ENCODE measurements at regions of chr5 and their contacts with region 1.

Region 1: GRCh38 chr5:82154776-82155175 is 123.4 kb downstream of the RPS23 start:
- DNase-seq: peak; percentile 34
- ATAC-seq: peak; percentile 89
- H3K4me3 ChIP-seq: no peak overlapping the region
- H3K27ac ChIP-seq: no peak overlapping the region
- H3K4me1 ChIP-seq: no peaks in the 10 kb centered on the region; the same call in 1 of the 2 replicates
- H3K27me3 ChIP-seq: no peaks in the 10 kb centered on the region
- CTCF ChIP-seq: no peak
- POLR2A ChIP-seq: no peak
- RAD21 ChIP-seq: no peak

Region 2: GRCh38 chr5:81787474-81788242 is 367.1 kb before region 1 on chr5:
- CTCF ChIA-PET with region 1: no interaction called
- POLR2A ChIA-PET with region 1: no interaction called
- dilution Hi-C with region 1: no loop called
- in situ Hi-C with region 1: no loop called
- intact Hi-C with region 1: no loop called
- DNase-seq: peak; percentile 80
- ATAC-seq: peak; percentile 71
- H3K4me3 ChIP-seq: no peak overlapping the region
- H3K27ac ChIP-seq: peak overlapping the region; percentile 55; the same call in 1 of the 2 replicates
- H3K4me1 ChIP-seq: peaks cover 12% of the 10 kb centered on the region
- H3K27me3 ChIP-seq: no peaks in the 10 kb centered on the region
- CTCF ChIP-seq: no peak
- POLR2A ChIP-seq: no peak
- RAD21 ChIP-seq: no peak

Region 3: GRCh38 chr5:82142217-82142841 is 12.4 kb before region 1 on chr5:
- CTCF ChIA-PET with region 1: interaction called, 11 read pairs
- POLR2A ChIA-PET with region 1: no interaction called
- dilution Hi-C with region 1: no loop called
- in situ Hi-C with region 1: no loop called
- intact Hi-C with region 1: no loop called
- DNase-seq: no peak
- ATAC-seq: no peak
- H3K4me3 ChIP-seq: no peak overlapping the region
- H3K27ac ChIP-seq: no peak overlapping the region
- H3K4me1 ChIP-seq: no peaks in the 10 kb centered on the region
- H3K27me3 ChIP-seq: no peaks in the 10 kb centered on the region
- CTCF ChIP-seq: no peak
- POLR2A ChIP-seq: no peak
- RAD21 ChIP-seq: no peak